PC-3 (cell line): ENCODE measurements at regions of chr7 and their contacts with region 1.

Region 1: DNA sequence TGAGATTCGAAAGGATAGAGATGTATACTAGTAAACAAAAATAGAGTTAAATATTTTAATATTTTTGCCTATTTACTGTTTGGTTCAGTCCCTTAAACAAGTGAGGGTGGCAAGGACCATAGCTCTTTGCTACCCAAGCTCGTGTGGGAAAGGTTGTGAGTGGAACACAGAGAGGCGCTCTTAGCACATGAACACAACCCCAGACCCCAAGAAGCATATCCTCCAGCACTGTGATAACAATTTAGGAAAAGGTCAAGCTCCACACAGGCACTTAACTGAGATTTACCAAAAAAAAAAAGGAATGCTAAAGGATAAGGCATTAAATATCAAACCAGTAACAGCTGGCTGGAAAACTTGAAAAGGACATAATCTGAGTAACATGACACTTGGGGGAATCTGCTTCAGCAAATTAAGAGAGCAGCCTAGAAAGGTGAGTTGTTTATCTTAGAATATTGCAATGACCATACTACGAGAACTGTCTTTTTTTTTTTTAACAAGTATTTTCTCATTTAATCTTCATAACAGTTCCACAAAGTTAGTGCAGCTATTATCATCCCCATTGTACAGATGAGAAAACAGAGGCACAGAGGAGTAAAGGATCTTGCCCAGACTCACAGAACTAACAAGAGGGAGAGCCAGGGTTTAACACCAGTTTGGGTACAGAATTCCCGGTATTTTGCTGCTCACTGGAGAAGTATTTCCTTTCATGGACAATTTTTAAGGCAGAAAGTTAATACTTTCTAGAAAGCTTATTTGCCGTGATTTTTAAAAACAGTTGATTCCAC is 303.5 kb upstream of the AOAH start:
- DNase-seq: peak; percentile 4
- ATAC-seq: no peak
- H3K4me3 ChIP-seq: no peak overlapping the region
- H3K27ac ChIP-seq: no peak overlapping the region
- H3K4me1 ChIP-seq: peaks cover 17% of the 10 kb centered on the region
- H3K27me3 ChIP-seq: 0 out of 2 replicates have a peak, but pooled peaks cover 13% of the 10 kb centered on the region
- CTCF ChIP-seq: 0 out of 2 replicates have a peak, but pooled peaks have one; percentile 29

Region 2: DNA sequence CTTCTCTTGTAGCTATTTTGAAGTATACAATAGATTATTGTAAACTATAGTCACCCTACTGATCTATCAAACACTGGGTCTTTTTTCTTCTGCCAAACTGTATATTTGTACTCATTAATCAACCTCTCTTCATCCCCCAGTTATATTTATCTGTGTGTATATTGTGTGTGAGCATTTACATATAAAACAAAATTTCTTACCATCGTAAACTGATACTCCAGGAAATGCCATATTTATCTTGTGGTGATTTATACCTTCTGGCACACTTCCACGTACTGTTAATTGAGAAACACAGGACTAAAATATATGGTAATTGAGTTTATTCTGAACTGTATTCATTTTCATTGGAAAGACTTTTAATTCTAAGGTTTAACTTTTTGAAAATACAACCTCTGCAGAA is 619.2 kb before region 1 on chr7:
- CTCF ChIA-PET with region 1: no interaction called
- POLR2A ChIA-PET with region 1: no interaction called
- intact Hi-C with region 1: no loop called
- DNase-seq: peak; percentile 36
- ATAC-seq: peak; percentile 71
- H3K4me3 ChIP-seq: no peak overlapping the region
- H3K27ac ChIP-seq: no peak overlapping the region
- H3K4me1 ChIP-seq: peaks cover 16% of the 10 kb centered on the region; the same call in 1 of the 2 replicates
- H3K27me3 ChIP-seq: no peaks in the 10 kb centered on the region
- CTCF ChIP-seq: no peak

Region 3: DNA sequence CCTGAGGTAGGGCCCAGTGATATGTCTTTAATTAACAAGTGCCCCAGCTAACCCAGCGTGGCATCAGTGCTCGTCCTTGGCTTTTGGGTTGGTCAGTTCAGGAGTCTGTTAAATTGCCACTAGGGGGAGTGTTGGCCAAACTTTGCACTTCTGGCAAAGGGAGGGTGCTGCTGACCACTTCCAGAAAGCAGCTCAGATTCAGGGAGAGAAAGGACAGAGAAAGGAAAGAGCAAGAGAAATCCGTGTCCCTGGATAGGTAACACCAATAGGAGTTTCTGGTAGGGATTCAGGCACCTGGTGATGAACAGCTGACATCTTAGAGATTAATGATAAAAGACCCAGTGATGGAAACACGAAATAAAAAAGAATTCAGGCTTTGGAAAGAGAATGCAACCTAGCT is 60.4 kb before region 1 on chr7:
- CTCF ChIA-PET with region 1: no interaction called
- POLR2A ChIA-PET with region 1: no interaction called
- intact Hi-C with region 1: loop called (anchors 1 kb)
- DNase-seq: peak; percentile 70
- ATAC-seq: peak; percentile 99
- H3K4me3 ChIP-seq: no peak overlapping the region
- H3K27ac ChIP-seq: no peak overlapping the region
- H3K4me1 ChIP-seq: no peaks in the 10 kb centered on the region
- H3K27me3 ChIP-seq: 0 out of 2 replicates have a peak, but pooled peaks cover 13% of the 10 kb centered on the region
- CTCF ChIP-seq: peak; percentile 82